Mammary epithelial cell (primary cell): ENCODE measurements at regions of chr16 and their contacts with region 1.

Region 1: DNA sequence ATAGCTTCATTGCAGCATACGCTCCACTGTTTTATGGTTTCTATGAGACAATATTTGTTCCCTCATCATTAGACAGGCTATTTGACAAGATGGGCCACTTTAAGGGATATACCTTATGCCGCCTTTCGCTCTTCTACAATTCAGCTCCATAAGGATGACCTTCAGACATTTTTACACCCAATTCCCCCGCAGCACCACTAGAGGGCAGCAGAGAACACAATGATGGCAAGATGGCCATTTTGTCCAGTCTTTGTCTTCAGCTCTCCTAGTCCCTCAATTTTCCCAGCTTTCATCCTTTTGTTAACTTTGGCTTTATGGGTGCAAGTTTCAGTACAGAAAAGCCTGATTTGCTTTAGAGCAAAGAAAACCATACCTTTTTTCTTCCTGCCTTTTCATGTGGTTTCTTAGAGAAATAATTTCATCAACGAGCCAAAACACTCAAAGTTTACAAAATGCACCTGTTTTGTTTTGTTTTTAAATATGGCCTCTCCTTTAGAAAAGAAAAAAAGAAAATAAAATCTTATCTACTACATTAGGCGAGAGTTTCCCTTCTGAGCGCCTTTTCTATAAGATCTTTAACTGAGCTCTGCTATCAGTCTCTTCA is 355.3 kb downstream of the TOX3 start:
- DNase-seq: peak; percentile 41
- H3K4me3 ChIP-seq: no peak overlapping the region
- H3K27ac ChIP-seq: no peak overlapping the region
- H3K4me1 ChIP-seq: no peaks in the 10 kb centered on the region
- H3K27me3 ChIP-seq: no peaks in the 10 kb centered on the region
- CTCF ChIP-seq: peak; percentile 90 to 95

Region 2: GRCh38 chr16:52861614-52862022 is 670.0 kb after region 1 on chr16:
- CTCF ChIA-PET with region 1: interaction called, 7 read pairs
- dilution Hi-C with region 1: no loop called
- in situ Hi-C with region 1: loop called in 1 of 2 experiments (anchors 25 kb)
- intact Hi-C with region 1: loop called (anchors 1 kb)
- DNase-seq: peak; percentile 5
- H3K4me3 ChIP-seq: no peak overlapping the region
- H3K27ac ChIP-seq: no peak overlapping the region
- H3K4me1 ChIP-seq: no peaks in the 10 kb centered on the region
- H3K27me3 ChIP-seq: peaks cover 3% of the 10 kb centered on the region
- CTCF ChIP-seq: peak; percentile 31 to 46

Region 3: DNA sequence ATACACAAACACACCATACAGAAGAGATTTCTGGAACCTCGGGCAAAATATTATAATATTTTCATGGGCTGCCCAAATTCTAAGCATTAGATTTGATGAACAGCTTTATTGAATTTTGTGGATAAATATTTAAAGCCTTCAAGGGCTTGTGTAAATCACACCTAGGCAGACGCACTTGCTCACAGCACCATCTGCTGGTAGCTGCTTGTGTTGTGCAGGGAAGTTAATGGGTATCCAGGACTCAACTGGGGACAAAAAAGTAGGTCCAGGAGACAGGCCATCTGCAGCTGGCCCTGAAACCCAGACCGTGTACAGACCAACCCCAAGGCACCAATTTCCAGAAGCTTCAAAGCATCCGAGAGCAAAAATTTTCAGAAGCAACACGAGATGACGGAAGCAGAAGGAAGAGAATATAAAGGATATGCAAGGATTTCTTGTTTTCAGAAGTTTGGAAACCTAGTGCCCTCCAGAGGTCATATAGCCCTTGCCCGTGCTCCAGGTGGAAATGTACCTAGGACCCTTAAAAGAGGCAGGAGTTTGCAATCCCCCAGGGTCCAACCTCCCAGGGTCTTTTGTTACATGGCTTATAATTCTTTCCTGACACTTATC is 721.0 kb after region 1 on chr16:
- CTCF ChIA-PET with region 1: interaction called, 5 read pairs
- dilution Hi-C with region 1: no loop called
- in situ Hi-C with region 1: no loop called
- intact Hi-C with region 1: loop called (anchors 1 kb)
- DNase-seq: peak; percentile 43
- H3K4me3 ChIP-seq: no peak overlapping the region
- H3K27ac ChIP-seq: no peak overlapping the region
- H3K4me1 ChIP-seq: no peaks in the 10 kb centered on the region
- H3K27me3 ChIP-seq: no peaks in the 10 kb centered on the region
- CTCF ChIP-seq: peak; percentile 87 to 89